ENCODE measurements at regions of chr11 and their contacts with region 1.

Region 1: GRCh38 chr11:117519170-117519569 is 191.5 kb downstream of the CEP164 start:
- DNase-seq: no peak
- ATAC-seq: no peak
- H3K4me3 ChIP-seq: no peak overlapping the region
- H3K27ac ChIP-seq: no peak overlapping the region
- H3K4me1 ChIP-seq: no peaks in the 10 kb centered on the region
- H3K27me3 ChIP-seq: no peaks in the 10 kb centered on the region
- CTCF ChIP-seq: no peak

Region 2: DNA sequence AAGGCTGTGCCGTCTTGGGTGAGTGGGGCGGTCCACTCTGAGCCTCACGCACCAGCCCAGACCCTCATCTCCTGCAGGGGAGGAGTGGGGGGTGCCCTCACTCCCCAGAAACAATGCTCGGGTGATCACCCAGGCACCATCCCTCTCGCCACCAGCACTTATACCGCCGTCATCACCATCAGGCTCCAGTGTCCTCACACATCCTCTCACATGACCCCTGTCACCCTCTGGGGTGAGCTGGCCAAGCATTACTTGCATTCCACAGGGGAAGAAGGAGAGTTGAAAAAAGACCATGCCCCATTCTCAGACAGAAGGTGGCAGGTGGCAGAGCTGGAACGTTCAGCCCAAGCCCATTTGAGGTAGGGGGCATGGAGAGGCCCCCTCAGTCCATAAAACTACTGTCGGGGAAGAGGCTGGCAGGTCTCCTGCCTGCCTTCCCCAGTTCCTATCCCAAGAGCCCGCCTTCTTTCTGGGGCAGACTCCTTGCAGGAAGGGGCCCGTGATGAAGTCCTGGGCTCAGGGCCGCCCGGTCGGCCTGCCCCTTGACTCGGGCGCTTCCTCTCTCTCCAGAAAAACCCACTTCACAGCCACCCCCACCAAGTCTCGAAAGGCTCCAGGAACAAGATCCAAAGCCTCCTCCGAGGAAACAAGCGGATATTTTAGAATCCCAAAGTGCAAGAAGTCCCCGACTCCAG is 124.6 kb after region 1 on chr11:
- intact Hi-C with region 1: loop called in 1 of 10 experiments (anchors 10 kb)
- DNase-seq: no peak
- ATAC-seq: peak in 4 of 8 donors; percentile 31 to 55 (median 47)
- H3K4me3 ChIP-seq: no peak overlapping the region
- H3K27ac ChIP-seq: no peak overlapping the region
- H3K4me1 ChIP-seq: peaks cover 0 to 8% (median 0%) of the 10 kb centered on the region in 9 donors
- H3K27me3 ChIP-seq: no peaks in the 10 kb centered on the region
- CTCF ChIP-seq: no peak